HEK293T (cell line): ENCODE measurements at regions of chr16 and their contacts with region 1.

Region 1: GRCh38 chr16:2883027-2883851 is at the start of gene FLYWCH2:
- DNase-seq: peak; percentile 95

Region 2: DNA sequence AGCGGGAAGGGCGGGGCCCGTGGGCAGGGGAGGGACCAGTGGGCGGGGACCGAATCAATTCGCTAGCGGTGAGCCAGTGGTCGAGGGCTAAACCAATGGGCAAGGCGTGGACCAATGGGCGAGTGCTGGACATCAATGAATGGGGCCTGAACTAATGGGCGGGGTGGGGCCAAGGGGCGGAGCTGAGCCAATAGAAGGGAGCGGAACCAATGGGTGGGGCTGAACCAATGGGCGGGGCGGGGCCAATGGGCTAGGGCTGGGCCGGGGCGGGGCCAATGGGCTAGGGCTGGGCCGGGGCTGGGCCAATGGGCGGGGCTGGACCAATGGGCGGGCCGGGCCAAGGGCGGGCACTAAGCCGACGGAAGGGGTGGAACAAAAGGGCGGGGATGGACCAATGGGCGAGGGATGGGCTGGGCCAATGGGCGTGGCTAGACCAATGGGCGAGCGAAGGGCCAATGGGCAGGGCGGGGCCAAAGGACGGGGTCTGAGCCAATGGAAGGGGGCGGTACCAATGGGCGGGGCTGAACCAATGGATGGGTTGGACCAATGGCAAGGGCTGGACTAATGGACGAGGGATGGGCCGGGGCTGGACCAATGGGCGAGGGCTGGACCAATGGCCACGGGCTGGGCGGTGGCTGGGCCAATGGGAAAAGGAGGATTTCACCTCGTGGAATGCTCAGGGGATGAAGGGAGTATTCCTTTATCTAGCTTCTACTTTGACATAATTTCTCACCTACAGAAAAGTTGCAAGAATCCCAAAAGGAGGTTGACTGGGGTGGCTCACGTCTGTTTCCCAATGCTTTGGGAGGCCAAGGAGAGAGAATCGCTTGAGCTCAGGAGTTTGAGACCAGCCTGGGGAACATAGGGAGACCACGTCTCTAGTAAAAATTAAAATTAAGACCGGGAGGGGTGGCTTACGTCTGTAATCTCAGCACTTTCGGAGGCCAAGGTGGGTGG is 22.5 kb after region 1 on chr16:
- CTCF ChIA-PET with region 1: interaction called, 5 read pairs
- POLR2A ChIA-PET with region 1: interaction called, 24 read pairs
- DNase-seq: peak; percentile 98